ENCODE measurements at regions of chr11 and their contacts with region 1.

Region 1: DNA sequence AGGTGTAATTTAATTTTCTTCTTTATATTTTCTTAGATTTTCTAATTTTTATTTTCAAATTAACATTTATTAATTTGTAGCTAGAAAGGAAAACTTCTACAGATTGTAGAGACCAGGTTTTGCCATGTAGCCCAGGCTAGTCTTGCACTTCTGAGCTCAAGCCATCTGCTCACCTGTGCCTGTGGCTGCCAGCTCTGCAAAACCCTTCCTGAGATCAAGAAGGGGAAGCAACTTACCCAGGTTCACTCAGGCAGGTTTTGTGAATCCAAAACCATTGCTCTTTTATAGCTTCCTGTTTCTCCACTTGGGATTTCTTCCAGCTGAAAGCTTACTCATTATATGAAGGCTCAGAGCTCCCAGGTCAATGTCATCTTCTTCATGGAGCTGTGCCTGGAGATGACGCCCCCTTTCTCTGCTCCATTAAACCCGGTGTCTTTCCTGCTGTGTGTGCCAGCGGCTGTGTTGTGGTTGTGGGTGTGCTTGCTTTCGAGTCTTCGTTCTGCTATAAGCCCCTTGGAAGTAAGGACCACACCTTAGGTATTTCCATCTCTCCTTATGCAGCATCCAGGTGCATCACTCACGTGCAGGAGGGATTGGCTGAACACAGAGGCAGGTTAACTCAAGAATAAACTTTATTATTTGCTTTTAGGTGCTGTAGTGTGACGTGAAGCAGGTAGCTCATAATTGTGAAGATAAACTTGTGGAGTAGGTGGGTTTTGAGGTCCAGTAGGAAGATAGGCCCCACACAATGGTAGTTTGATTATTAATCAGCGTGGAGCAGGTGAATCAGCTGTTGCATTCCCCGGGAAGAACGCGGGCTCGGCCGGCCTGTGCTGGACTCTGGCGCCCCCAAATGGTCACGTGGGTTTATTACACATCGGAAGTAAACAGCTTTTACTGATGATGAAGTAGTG is 42.2 kb upstream of the INCENP start:
- DNase-seq: peak; percentile 66 to 89 (median 80)
- ATAC-seq: peak; percentile 92
- H3K4me3 ChIP-seq: no peak overlapping the region
- H3K4me3 Mint-ChIP-seq: peak overlapping the region; percentile 59
- H3K27ac ChIP-seq: no peak overlapping the region
- H3K27ac Mint-ChIP-seq: peak overlapping the region; percentile 37
- H3K4me1 ChIP-seq: no peaks in the 10 kb centered on the region
- H3K4me1 Mint-ChIP-seq: peaks cover 7% of the 10 kb centered on the region
- H3K27me3 ChIP-seq: no peaks in the 10 kb centered on the region
- H3K27me3 Mint-ChIP-seq: no peaks in the 10 kb centered on the region
- CTCF ChIP-seq: peak; percentile 94

Region 2: GRCh38 chr11:61800331-61801281 is 281.0 kb before region 1 on chr11:
- CTCF ChIA-PET with region 1: interaction called, 81 read pairs
- POLR2A ChIA-PET with region 1: interaction called, 3 read pairs
- intact Hi-C with region 1: loop called (anchors 1 to 2 kb)
- DNase-seq: no peak
- ATAC-seq: no peak
- H3K4me3 ChIP-seq: no peak overlapping the region
- H3K4me3 Mint-ChIP-seq: no peak overlapping the region
- H3K27ac ChIP-seq: no peak overlapping the region
- H3K27ac Mint-ChIP-seq: no peak overlapping the region
- H3K4me1 ChIP-seq: no peaks in the 10 kb centered on the region
- H3K4me1 Mint-ChIP-seq: peaks cover 3% of the 10 kb centered on the region
- H3K27me3 ChIP-seq: no peaks in the 10 kb centered on the region
- H3K27me3 Mint-ChIP-seq: no peaks in the 10 kb centered on the region
- CTCF ChIP-seq: no peak

Region 3: DNA sequence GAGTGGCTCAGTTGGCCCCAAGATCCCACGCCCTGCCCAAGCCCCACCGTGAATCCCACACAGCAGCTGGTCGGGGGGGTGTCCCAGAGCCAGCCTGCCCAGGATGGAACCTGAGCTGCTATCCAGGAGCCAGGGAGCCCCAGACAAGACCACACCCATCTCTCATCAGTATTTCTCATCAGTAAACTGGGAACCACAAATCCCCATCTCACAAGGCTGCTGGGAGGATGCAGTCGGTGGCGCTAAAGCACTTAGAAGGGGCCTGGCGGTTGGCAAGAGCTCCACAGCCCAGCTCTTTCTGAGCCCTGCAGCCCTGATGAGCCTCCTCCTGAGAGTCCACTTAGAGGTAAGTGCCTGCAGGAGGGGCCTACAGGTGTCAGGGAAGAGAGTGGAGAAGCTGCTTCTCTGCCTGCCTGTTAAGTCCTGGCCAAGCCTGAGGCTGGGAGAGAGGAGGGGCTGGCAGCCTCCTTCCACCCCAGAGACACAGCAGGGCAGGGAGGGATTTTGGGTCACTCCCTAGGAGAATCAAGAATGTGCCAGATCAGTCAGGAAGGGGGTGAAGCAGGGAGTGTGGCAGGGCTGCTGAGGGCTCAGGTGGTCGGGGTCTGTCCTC is 196.4 kb before region 1 on chr11:
- CTCF ChIA-PET with region 1: interaction called, 10 read pairs
- POLR2A ChIA-PET with region 1: no interaction called
- intact Hi-C with region 1: no loop called
- DNase-seq: no peak
- ATAC-seq: no peak
- H3K4me3 ChIP-seq: no peak overlapping the region
- H3K4me3 Mint-ChIP-seq: no peak overlapping the region
- H3K27ac ChIP-seq: no peak overlapping the region
- H3K27ac Mint-ChIP-seq: no peak overlapping the region
- H3K4me1 ChIP-seq: peaks cover 4% of the 10 kb centered on the region
- H3K4me1 Mint-ChIP-seq: no peaks in the 10 kb centered on the region
- H3K27me3 ChIP-seq: no peaks in the 10 kb centered on the region
- H3K27me3 Mint-ChIP-seq: peaks cover 2% of the 10 kb centered on the region
- CTCF ChIP-seq: no peak

Region 4: GRCh38 chr11:61912530-61912898 is 169.1 kb before region 1 on chr11:
- CTCF ChIA-PET with region 1: interaction called, 23 read pairs
- POLR2A ChIA-PET with region 1: no interaction called
- intact Hi-C with region 1: no loop called
- DNase-seq: peak in 1 of 9 experiments; percentile 24
- ATAC-seq: no peak
- H3K4me3 ChIP-seq: no peak overlapping the region
- H3K4me3 Mint-ChIP-seq: no peak overlapping the region
- H3K27ac ChIP-seq: no peak overlapping the region
- H3K27ac Mint-ChIP-seq: no peak overlapping the region
- H3K4me1 ChIP-seq: no peaks in the 10 kb centered on the region
- H3K4me1 Mint-ChIP-seq: peaks cover 2% of the 10 kb centered on the region
- H3K27me3 ChIP-seq: peaks cover 0 to 4% of the 10 kb centered on the region in 2 experiments
- H3K27me3 Mint-ChIP-seq: peaks cover 27% of the 10 kb centered on the region
- CTCF ChIP-seq: no peak

Region 5: GRCh38 chr11:62025487-62026105 is 56.0 kb before region 1 on chr11:
- CTCF ChIA-PET with region 1: interaction called, 9 read pairs
- POLR2A ChIA-PET with region 1: interaction called, 4 read pairs
- intact Hi-C with region 1: loop called in 1 of 2 experiments (anchors 2 kb)
- DNase-seq: peak; percentile 41 to 97 (median 77)
- ATAC-seq: peak; percentile 87
- H3K4me3 ChIP-seq: peak overlapping the region in 1 of 2 experiments; percentile 24
- H3K4me3 Mint-ChIP-seq: peak overlapping the region; percentile 44
- H3K27ac ChIP-seq: peak overlapping the region; percentile 78 to 91
- H3K27ac Mint-ChIP-seq: peak overlapping the region; percentile 95
- H3K4me1 ChIP-seq: peaks cover 15% of the 10 kb centered on the region
- H3K4me1 Mint-ChIP-seq: peaks cover 20% of the 10 kb centered on the region
- H3K27me3 ChIP-seq: no peaks in the 10 kb centered on the region
- H3K27me3 Mint-ChIP-seq: no peaks in the 10 kb centered on the region
- CTCF ChIP-seq: no peak

Region 6: GRCh38 chr11:62108017-62108750 is 26.5 kb after region 1 on chr11:
- CTCF ChIA-PET with region 1: interaction called, 65 read pairs
- POLR2A ChIA-PET with region 1: interaction called, 3 read pairs
- intact Hi-C with region 1: no loop called
- DNase-seq: peak in 7 of 9 experiments; percentile 8 to 80 (median 45)
- ATAC-seq: peak; percentile 65
- H3K4me3 ChIP-seq: no peak overlapping the region
- H3K4me3 Mint-ChIP-seq: no peak overlapping the region
- H3K27ac ChIP-seq: no peak overlapping the region
- H3K27ac Mint-ChIP-seq: no peak overlapping the region
- H3K4me1 ChIP-seq: peaks cover 19% of the 10 kb centered on the region
- H3K4me1 Mint-ChIP-seq: peaks cover 19% of the 10 kb centered on the region
- H3K27me3 ChIP-seq: no peaks in the 10 kb centered on the region
- H3K27me3 Mint-ChIP-seq: no peaks in the 10 kb centered on the region
- CTCF ChIP-seq: peak; percentile 70

Measured in CD8-positive, alpha-beta T cell (primary cell).